Mammary epithelial cell (primary cell): ENCODE measurements at regions of chr7 and their contacts with region 1.

Region 1: GRCh38 chr7:31192986-31193385 is 140.9 kb downstream of the ADCYAP1R1 start:
- DNase-seq: peak; percentile 52
- H3K4me3 ChIP-seq: no peak overlapping the region
- H3K27ac ChIP-seq: no peak overlapping the region
- H3K4me1 ChIP-seq: no peaks in the 10 kb centered on the region
- H3K27me3 ChIP-seq: no peaks in the 10 kb centered on the region
- CTCF ChIP-seq: peak; percentile 83 to 93

Region 2: DNA sequence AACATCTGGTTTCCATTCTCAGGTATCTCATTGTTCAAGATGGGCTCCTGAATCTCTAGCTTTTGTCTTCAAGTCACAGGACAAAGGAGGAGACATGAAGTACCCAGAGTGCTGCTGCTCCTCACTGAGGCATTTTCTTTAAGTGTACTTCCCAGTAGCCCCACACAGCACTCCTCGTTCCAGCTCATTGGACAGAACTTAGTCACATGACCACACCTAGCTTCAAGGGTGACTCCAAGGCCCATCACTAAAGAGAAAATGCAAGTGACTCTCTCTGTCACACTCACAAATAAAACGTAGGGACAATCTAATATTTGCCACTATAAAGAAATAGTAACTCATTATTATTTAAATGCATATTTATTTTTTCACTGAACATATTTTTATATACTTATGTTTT is 205.8 kb after region 1 on chr7:
- CTCF ChIA-PET with region 1: no interaction called
- dilution Hi-C with region 1: no loop called
- in situ Hi-C with region 1: no loop called
- intact Hi-C with region 1: no loop called
- DNase-seq: no peak
- H3K4me3 ChIP-seq: no peak overlapping the region
- H3K27ac ChIP-seq: no peak overlapping the region
- H3K4me1 ChIP-seq: no peaks in the 10 kb centered on the region
- H3K27me3 ChIP-seq: no peaks in the 10 kb centered on the region
- CTCF ChIP-seq: no peak

Region 3: DNA sequence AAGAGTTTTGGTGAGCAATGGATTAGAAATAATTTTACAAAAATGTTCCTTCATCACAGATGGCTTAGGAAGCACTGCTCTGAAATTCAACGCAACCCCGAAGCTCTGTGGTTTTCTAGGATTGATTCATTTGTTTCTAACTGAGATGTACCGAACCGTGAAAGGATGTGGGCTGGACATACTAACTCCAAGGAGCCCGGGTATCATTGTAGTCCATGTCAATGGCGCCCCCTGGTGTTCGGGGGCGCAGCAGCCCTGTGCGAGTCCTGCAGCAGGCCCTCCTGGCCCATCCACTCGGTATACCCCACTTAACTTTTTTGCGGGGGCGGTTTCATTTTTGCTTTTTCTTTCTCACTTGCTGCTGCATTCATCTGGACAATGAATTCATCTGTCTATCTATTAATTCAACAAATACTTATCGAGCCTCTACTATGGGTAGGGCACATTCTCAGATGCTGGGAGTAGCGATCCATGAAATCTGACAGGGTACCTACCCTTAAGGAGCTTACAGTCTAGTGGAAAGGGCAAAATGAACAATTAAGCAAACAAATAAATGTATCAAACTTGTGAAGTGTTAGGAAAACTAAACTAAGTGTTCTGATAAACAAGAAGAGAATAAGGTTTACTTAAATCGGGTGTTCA is 295.7 kb after region 1 on chr7:
- CTCF ChIA-PET with region 1: no interaction called
- dilution Hi-C with region 1: no loop called
- in situ Hi-C with region 1: no loop called
- intact Hi-C with region 1: loop called (anchors 1 kb)
- DNase-seq: peak; percentile 57
- H3K4me3 ChIP-seq: no peak overlapping the region
- H3K27ac ChIP-seq: no peak overlapping the region
- H3K4me1 ChIP-seq: peaks cover 21% of the 10 kb centered on the region
- H3K27me3 ChIP-seq: no peaks in the 10 kb centered on the region
- CTCF ChIP-seq: peak; percentile 70 to 80